BJ (cell line): ENCODE measurements at regions of chr5 and their contacts with region 1.

Region 1: GRCh38 chr5:151115274-151115905 is 34.6 kb upstream of the TNIP1 start:
- DNase-seq: no peak
- H3K4me3 ChIP-seq: no peak overlapping the region
- H3K27me3 ChIP-seq: no peaks in the 10 kb centered on the region
- CTCF ChIP-seq: peak; percentile 98

Region 2: DNA sequence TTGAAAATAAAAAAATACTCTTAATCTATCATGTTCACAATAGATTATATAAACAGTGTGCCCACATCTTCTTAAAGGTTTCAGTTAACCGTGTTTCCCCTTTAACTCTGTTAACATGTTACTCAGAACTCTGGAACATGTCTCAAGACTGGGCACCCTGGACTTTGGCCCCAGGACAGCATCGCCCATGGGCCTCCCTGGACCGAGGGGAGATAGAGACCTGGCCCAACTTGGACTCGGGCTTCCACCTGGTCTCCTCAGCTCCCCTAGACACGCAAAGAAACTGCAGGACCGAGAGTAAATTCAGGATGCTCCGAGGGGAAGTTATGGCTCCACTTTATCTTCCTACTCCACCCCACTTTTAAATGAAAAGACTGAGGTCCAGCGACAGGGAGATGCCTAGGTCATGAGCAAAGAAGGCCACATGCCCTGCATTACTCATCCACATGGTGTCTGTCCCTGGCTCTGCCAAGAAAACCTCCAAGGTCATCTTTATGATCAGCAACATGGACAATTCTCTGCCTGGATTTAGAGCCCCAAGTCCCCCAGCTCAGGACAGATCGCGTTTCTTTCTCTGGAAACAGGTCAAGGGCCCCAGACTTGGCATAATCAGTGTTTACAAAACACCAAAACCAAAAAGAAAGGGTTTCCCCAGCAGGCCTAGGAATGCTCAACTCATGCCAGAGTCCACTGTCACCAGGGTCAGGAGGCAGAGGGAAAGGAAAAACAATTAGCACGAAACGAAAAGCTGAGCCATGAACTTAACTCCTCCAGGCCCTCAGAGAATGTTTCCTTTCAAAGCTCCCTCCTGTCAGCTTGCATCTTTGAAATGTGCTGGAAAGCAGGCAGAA is 77.6 kb before region 1 on chr5:
- CTCF ChIA-PET with region 1: interaction called, 36 read pairs
- POLR2A ChIA-PET with region 1: no interaction called
- DNase-seq: no peak
- H3K4me3 ChIP-seq: no peak overlapping the region
- H3K27me3 ChIP-seq: no peaks in the 10 kb centered on the region
- CTCF ChIP-seq: no peak

Region 3: GRCh38 chr5:151080623-151081430 is 34.6 kb before region 1 on chr5 and contains the start of gene TNIP1:
- CTCF ChIA-PET with region 1: interaction called, 14 read pairs
- POLR2A ChIA-PET with region 1: no interaction called
- DNase-seq: no peak
- H3K4me3 ChIP-seq: peak within 1 kb of the TSS; percentile 92
- H3K27me3 ChIP-seq: no peaks in the 10 kb centered on the region
- CTCF ChIP-seq: no peak
- polyA plus RNA-seq, gene TNIP1: 54.5 and 80.8 TPM in 2 replicates

Region 4: DNA sequence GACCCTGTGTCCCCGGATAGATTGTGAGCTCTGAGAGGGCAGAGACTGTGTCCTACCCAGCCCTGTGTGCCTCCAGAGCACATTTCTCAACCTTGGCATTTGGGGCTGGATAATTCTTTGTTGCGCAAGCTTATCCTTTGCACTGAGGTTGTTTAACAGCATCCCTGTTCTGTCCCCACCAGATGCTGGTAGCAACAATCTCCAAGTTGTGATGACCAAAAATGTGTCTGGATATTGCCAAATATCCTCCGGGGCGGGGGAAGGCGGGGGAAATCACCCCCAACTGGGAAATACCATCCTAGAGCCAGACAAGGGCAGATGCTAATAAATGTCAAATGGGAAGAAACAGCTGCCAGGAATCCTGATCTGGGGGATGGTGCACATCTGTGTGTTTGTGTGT is 10.6 kb before region 1 on chr5:
- CTCF ChIA-PET with region 1: interaction called, 28 read pairs
- POLR2A ChIA-PET with region 1: no interaction called
- DNase-seq: peak; percentile 80
- H3K4me3 ChIP-seq: no peak overlapping the region
- H3K27me3 ChIP-seq: no peaks in the 10 kb centered on the region
- CTCF ChIP-seq: no peak

Region 5: DNA sequence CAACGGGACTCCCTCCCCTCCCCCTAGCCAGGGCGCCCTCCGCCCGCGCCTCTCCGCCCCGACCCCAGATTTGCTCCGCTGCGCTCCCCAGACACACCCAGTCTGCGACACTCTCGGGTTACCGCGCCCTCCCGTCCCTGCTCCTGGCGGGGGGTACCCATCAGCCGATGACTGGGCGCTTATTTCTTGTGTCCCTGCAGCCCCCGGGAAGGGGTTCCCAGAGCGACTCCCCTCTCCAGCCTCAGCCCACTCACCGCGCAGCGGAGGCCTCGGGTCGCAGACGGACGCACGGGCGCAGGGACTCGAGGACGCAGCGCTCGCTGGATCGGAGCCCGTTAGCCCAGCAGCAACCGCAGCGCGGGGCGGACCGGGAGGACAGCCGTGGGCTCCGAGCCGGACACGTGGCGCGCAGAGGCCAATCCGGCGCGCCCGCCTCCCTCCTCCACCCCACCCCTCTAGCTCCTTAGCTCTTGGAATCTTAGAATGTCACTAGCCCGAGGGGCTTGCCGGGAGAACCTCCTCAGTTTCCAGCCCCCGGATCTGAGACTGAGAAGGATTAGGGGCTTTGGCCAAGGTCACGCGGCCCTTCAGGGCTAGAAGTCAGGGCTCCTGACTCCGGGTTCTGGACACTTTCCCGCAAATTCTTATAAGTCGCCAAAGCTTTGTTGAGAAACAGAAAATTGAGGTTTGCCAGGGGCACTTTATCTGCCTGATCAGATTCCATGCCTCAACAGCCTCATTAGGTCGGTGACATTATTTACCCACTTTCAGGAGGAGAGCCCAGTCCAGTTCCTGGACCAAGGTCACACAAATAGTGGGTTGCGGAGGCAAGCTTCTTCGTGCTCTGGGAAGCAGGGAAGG is 42.3 kb after region 1 on chr5 and contains the start of gene ANXA6:
- CTCF ChIA-PET with region 1: interaction called, 89 read pairs
- POLR2A ChIA-PET with region 1: interaction called, 3 read pairs
- DNase-seq: peak; percentile 34
- H3K4me3 ChIP-seq: peak within 1 kb of the TSS; percentile 68
- H3K27me3 ChIP-seq: no peaks in the 10 kb centered on the region
- CTCF ChIP-seq: no peak
- polyA plus RNA-seq, gene ANXA6: 479 and 528 TPM in 2 replicates

Region 6: DNA sequence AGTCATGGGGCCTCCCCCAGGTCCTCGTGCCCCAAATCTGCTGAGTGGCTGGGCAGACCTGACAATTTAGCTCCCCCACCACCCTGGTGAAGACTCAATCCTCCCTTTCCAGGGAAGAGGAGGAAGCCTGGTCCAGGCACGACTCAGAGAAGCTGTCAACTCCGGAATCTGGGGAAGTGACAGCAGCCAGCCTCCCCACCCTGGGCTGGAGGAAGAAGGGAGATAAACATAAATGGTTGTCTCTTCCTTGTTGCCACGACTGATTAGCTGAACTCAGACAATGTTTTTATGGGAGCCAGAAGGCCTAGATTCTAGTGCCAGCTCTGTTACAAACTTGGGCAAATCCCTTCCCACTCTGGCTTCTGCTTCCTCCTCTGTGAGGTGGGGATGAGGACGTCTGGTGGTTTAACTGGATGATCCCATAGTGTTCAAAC is 93.1 kb after region 1 on chr5:
- CTCF ChIA-PET with region 1: no interaction called
- POLR2A ChIA-PET with region 1: no interaction called
- DNase-seq: no peak
- H3K4me3 ChIP-seq: no peak overlapping the region
- H3K27me3 ChIP-seq: peaks cover 2% of the 10 kb centered on the region; the same call in 1 of the 2 replicates
- CTCF ChIP-seq: no peak